ENCODE measurements at regions of chr9 and their contacts with region 1.

Region 1: GRCh38 chr9:37004424-37004935 is 29.6 kb downstream of the PAX5 start:
- DNase-seq: no peak
- ATAC-seq: peak; percentile 47
- H3K4me3 ChIP-seq: peak overlapping the region; percentile 27; the same call in 1 of the 2 replicates
- H3K27ac ChIP-seq: peak overlapping the region; percentile 98
- H3K4me1 ChIP-seq: peaks cover 92% of the 10 kb centered on the region
- H3K27me3 ChIP-seq: no peaks in the 10 kb centered on the region
- CTCF ChIP-seq: no peak
- EP300 ChIP-seq: no peak
- POLR2A ChIP-seq: peak; percentile 38
- RAD21 ChIP-seq: no peak

Region 2: GRCh38 chr9:36946653-36947052 is 57.8 kb before region 1 on chr9:
- CTCF ChIA-PET with region 1: no interaction called
- POLR2A ChIA-PET with region 1: no interaction called
- RAD21 ChIA-PET with region 1: no interaction called
- SMC1A ChIA-PET with region 1: no interaction called
- in situ Hi-C with region 1: no loop called
- intact Hi-C with region 1: loop called (anchors 10 kb)
- DNase-seq: no peak
- ATAC-seq: peak; percentile 55
- H3K4me3 ChIP-seq: no peak overlapping the region
- H3K27ac ChIP-seq: peak overlapping the region; percentile 62
- H3K4me1 ChIP-seq: peaks cover 20% of the 10 kb centered on the region
- H3K27me3 ChIP-seq: no peaks in the 10 kb centered on the region
- CTCF ChIP-seq: no peak
- EP300 ChIP-seq: no peak
- POLR2A ChIP-seq: no peak
- RAD21 ChIP-seq: no peak

Measured in GM12878 (cell line).